ENCODE measurements at regions of chrX and their contacts with region 1.

Region 1: GRCh38 chrX:41350976-41351569 is 17.1 kb downstream of the DDX3X start:
- DNase-seq: no peak
- ATAC-seq: peak in 3 of 4 experiments; percentile 9 to 17 (median 11)
- H3K4me3 ChIP-seq: no peak overlapping the region
- H3K4me3 Mint-ChIP-seq: no peak overlapping the region
- H3K27ac ChIP-seq: no peak overlapping the region
- H3K27ac Mint-ChIP-seq: peak overlapping the region in 1 of 2 donors; percentile 46
- H3K4me1 ChIP-seq: peaks cover 0 to 12% of the 10 kb centered on the region in 2 experiments
- H3K4me1 Mint-ChIP-seq: peaks cover 31 to 64% (median 51%) of the 10 kb centered on the region in 3 donors
- H3K27me3 ChIP-seq: no peaks in the 10 kb centered on the region
- H3K27me3 Mint-ChIP-seq: no peaks in the 10 kb centered on the region

Region 2: GRCh38 chrX:41198406-41198805 is 152.7 kb before region 1 on chrX:
- CTCF ChIA-PET with region 1: no interaction called
- POLR2A ChIA-PET with region 1: interaction called in 1 of 2 experiments, 10 read pairs
- DNase-seq: no peak
- ATAC-seq: no peak
- H3K4me3 ChIP-seq: no peak overlapping the region
- H3K4me3 Mint-ChIP-seq: no peak overlapping the region
- H3K27ac ChIP-seq: no peak overlapping the region
- H3K27ac Mint-ChIP-seq: no peak overlapping the region
- H3K4me1 ChIP-seq: no peaks in the 10 kb centered on the region
- H3K4me1 Mint-ChIP-seq: peaks cover 0 to 4% (median 3%) of the 10 kb centered on the region in 3 donors
- H3K27me3 ChIP-seq: no peaks in the 10 kb centered on the region
- H3K27me3 Mint-ChIP-seq: no peaks in the 10 kb centered on the region

Region 3: GRCh38 chrX:41337140-41337539 is 13.9 kb before region 1 on chrX:
- CTCF ChIA-PET with region 1: interaction called in 1 of 2 experiments, 3 read pairs
- POLR2A ChIA-PET with region 1: interaction called, 5 to 11 read pairs
- DNase-seq: no peak
- ATAC-seq: no peak
- H3K4me3 ChIP-seq: peak overlapping the region; percentile 47 to 99
- H3K4me3 Mint-ChIP-seq: peak overlapping the region; percentile 94 to 97 (median 96)
- H3K27ac ChIP-seq: no peak overlapping the region
- H3K27ac Mint-ChIP-seq: peak overlapping the region; percentile 39 to 100
- H3K4me1 ChIP-seq: peaks cover 13 to 45% of the 10 kb centered on the region in 2 experiments
- H3K4me1 Mint-ChIP-seq: peaks cover 47 to 90% (median 66%) of the 10 kb centered on the region in 3 donors
- H3K27me3 ChIP-seq: no peaks in the 10 kb centered on the region
- H3K27me3 Mint-ChIP-seq: no peaks in the 10 kb centered on the region

Region 4: DNA sequence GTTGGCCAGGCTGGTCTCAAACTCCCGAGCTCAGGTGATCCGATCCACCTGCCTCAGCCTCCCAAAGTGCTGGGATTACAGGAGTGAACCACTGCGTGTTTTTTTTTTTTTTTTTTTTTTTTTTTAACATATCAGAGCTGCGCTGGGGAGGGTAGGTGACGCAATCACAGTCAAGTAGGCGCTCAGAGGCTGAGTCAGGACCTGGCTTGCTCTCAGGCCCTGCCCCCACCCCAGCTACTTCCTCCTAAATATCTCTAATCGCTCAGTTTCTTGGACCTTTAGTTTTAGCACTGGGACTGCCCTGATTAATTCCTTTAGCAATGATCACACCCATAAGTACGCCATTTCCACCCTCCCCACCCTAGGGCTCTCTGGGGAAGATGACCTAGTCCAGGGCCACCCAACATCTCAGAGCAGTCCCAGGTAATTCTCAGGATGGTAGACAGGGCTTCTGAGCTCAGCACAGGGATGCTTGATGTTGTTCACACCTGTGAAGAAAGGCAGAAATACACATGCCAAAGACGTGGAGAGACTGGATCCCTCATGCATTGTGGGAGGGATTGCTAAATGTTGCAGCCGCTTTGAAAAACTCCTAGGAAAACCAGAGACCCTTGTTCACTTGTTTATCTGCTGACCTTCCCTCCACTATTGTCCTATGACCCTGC is 33.1 kb after region 1 on chrX:
- CTCF ChIA-PET with region 1: interaction called in 1 of 2 experiments, 7 read pairs
- POLR2A ChIA-PET with region 1: interaction called in 1 of 2 experiments, 12 read pairs
- DNase-seq: peak in 33 of 35 experiments; percentile 1 to 76 (median 29)
- ATAC-seq: peak; percentile 51 to 73 (median 64)
- H3K4me3 ChIP-seq: no peak overlapping the region
- H3K4me3 Mint-ChIP-seq: peak overlapping the region in 1 of 3 donors; percentile 72
- H3K27ac ChIP-seq: no peak overlapping the region
- H3K27ac Mint-ChIP-seq: peak overlapping the region; percentile 32 to 64
- H3K4me1 ChIP-seq: peaks cover 0 to 26% of the 10 kb centered on the region in 2 experiments
- H3K4me1 Mint-ChIP-seq: peaks cover 12 to 16% (median 16%) of the 10 kb centered on the region in 3 donors
- H3K27me3 ChIP-seq: no peaks in the 10 kb centered on the region
- H3K27me3 Mint-ChIP-seq: no peaks in the 10 kb centered on the region

Region 5: DNA sequence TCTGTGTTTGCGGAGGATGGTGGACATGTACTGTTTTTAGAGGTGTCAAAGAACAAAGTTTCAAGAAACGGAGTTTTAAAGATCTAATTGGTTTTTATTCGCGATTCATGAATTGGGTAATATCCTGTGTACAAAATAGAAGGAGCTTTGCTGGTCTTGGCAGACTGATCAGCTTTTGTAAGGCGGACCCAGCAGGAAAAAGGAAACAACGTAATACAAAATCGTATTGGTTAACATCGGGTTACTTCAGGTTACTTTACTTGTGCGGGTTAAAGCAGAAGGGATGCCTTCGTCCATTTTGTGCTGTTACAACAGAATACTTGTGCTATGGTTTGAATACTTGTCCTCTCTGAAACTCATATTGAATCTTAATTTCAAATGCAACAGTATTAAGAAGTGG is 84.6 kb after region 1 on chrX:
- CTCF ChIA-PET with region 1: no interaction called
- POLR2A ChIA-PET with region 1: no interaction called
- DNase-seq: no peak
- ATAC-seq: no peak
- H3K4me3 ChIP-seq: no peak overlapping the region
- H3K4me3 Mint-ChIP-seq: no peak overlapping the region
- H3K27ac ChIP-seq: no peak overlapping the region
- H3K27ac Mint-ChIP-seq: no peak overlapping the region
- H3K4me1 ChIP-seq: no peaks in the 10 kb centered on the region
- H3K4me1 Mint-ChIP-seq: no peaks in the 10 kb centered on the region
- H3K27me3 ChIP-seq: no peaks in the 10 kb centered on the region
- H3K27me3 Mint-ChIP-seq: peaks cover 0 to 13% of the 10 kb centered on the region in 2 donors

Region 6: DNA sequence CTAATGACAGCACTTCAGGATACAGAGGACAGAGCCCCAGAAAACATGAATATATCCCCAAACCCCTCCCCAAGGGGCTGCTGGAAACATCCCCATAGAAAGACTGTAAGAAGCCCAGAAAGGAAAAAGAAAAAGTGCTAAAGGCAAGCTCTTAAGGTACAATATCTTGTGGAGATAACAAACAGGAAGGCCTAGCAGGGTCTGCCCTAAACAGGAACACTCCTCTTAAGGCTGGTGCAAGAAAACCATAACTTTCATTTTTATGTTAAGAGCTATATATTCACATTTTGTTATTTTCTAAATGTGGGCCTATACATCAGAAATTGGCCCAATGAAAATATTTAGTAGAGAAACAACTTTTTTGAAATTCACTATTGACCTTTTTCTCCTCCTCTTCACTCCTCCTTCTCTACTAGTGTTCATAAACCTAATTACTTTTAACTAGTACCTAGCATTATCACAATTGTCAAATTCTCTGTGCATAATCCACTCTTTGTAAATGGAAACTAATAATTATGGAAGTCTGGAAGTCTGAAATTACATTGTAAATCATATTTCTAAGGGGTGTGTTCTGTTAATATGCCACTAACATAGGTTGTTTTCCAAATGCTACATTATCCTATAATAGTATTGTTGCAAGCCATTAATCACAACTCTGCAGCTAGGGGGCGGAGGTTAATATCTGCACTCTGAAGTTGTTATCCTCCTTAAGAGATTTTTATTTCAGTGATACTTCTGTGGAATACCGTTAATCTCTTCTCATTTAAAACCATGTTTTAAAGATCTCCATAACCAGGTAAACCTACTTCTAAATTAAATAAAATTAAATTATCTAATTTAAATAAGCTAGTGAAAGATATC is 512.5 kb after region 1 on chrX:
- CTCF ChIA-PET with region 1: no interaction called
- POLR2A ChIA-PET with region 1: no interaction called
- DNase-seq: peak in 1 of 35 experiments; percentile 12
- ATAC-seq: peak in 1 of 4 experiments; percentile 53
- H3K4me3 ChIP-seq: no peak overlapping the region
- H3K4me3 Mint-ChIP-seq: peak overlapping the region in 2 of 3 donors; percentile 4 to 6
- H3K27ac ChIP-seq: peak overlapping the region; percentile 38
- H3K27ac Mint-ChIP-seq: peak overlapping the region; percentile 85 to 86
- H3K4me1 ChIP-seq: peaks cover 8 to 11% of the 10 kb centered on the region in 2 experiments
- H3K4me1 Mint-ChIP-seq: peaks cover 35 to 67% (median 53%) of the 10 kb centered on the region in 3 donors
- H3K27me3 ChIP-seq: no peaks in the 10 kb centered on the region
- H3K27me3 Mint-ChIP-seq: peaks cover 0 to 5% of the 10 kb centered on the region in 2 donors

Region 7: GRCh38 chrX:43148305-43148704 is 1797.2 kb after region 1 on chrX:
- CTCF ChIA-PET with region 1: no interaction called
- POLR2A ChIA-PET with region 1: no interaction called
- DNase-seq: no peak
- ATAC-seq: no peak
- H3K4me3 ChIP-seq: no peak overlapping the region
- H3K4me3 Mint-ChIP-seq: no peak overlapping the region
- H3K27ac ChIP-seq: no peak overlapping the region
- H3K27ac Mint-ChIP-seq: no peak overlapping the region
- H3K4me1 ChIP-seq: no peaks in the 10 kb centered on the region
- H3K4me1 Mint-ChIP-seq: peaks cover 6 to 11% (median 11%) of the 10 kb centered on the region in 3 donors
- H3K27me3 ChIP-seq: no peaks in the 10 kb centered on the region
- H3K27me3 Mint-ChIP-seq: peaks cover 0 to 19% of the 10 kb centered on the region in 2 donors

Measured in T-cell (primary cell).